ENCODE measurements at regions of chr9 and their contacts with region 1.

Region 1: DNA sequence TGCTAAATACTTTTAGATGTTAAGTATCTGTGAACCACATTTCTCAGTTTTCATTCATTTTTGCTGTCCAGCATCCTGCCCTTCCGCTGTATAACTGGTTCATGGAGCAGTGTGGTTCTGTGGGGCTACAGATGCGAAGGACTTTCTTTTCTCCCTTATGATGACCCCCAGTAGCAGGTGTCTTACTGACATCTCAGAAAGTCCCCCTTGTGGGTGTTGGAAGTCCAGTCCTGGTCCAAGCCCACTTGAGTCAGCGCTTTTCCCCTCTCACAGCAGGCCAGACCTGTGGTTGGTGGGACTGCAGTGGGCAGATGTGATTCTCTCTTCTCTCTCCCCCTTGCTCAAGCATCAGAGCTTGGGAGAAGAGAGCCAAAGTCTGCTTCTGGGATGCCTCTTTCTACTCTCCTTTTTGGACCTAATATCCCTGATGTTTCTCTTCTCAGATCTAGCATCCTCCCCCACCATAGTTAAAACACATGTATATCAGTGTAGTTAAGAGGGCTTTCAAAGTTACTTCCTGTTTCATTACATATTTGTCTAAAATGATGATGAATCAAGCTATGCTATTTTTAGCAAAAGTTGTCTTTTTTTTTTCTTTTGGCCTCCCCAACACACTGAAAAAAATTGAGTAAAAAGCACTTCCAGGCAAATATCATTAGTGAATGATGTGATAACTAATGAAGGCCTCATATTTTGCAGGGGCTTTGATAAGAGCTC is 119.5 kb upstream of the ZNF618 start:
- H3K4me3 ChIP-seq: no peak overlapping the region
- H3K27ac ChIP-seq: no peak overlapping the region
- H3K4me1 ChIP-seq: no peaks in the 10 kb centered on the region
- CTCF ChIP-seq: no peak

Region 2: GRCh38 chr9:113737517-113738271 is 18.9 kb before region 1 on chr9:
- CTCF ChIA-PET with region 1: interaction called, 17 read pairs
- POLR2A ChIA-PET with region 1: no interaction called
- H3K4me3 ChIP-seq: no peak overlapping the region
- H3K27ac ChIP-seq: no peak overlapping the region
- H3K4me1 ChIP-seq: no peaks in the 10 kb centered on the region
- CTCF ChIP-seq: no peak